ENCODE measurements at regions of chr2 and their contacts with region 1.

Region 1: DNA sequence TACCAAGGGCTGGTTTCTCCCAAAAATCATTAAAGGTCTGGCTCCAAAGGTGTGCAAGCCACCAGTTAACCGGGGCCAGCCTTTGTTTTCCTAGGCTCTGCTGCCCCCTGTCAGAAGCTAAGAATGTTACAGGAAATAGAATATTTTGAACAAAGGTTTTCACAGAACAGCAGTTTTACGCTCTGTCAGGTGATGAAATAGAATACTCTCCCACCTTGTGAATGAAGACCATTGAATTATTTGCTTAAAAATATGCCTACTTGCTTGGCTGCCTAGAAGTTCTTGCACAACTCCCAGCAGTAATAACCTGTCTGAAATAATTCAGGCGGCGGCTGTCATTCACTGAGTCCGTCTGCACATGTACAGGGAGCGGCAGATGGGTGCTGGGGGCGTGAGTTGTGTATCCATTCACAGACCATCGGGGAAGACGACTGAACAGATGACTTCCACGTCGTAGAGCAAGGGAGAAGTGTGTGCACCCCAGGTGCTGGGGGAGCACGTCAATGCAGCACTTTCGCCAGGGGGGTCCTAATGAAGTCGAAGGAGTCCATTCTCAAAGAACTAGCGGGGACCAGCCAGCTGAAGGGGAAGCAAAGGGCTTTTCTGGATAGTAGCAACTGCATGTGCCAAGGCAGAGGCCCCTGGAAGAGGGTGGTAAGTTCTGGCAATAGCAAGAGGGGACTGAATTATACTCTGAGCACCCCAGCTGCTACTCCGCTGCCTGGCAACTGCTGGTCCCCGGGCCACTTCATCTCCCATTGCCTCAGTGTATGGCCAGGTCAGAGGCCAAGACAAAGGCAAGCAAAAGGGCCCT is 56.1 kb downstream of the SF3B1 start:
- DNase-seq: peak; percentile 60 to 69 (median 63)
- H3K4me3 ChIP-seq: no peak overlapping the region
- H3K4me3 Mint-ChIP-seq: no peak overlapping the region
- H3K27ac ChIP-seq: no peak overlapping the region
- H3K27ac Mint-ChIP-seq: peak overlapping the region in 2 of 7 donors; percentile 0 to 52
- H3K4me1 ChIP-seq: peaks cover 8% of the 10 kb centered on the region
- H3K4me1 Mint-ChIP-seq: peaks cover 5 to 12% (median 10%) of the 10 kb centered on the region in 4 donors
- H3K27me3 ChIP-seq: no peaks in the 10 kb centered on the region
- H3K27me3 Mint-ChIP-seq: peaks cover 1 to 3% of the 10 kb centered on the region in 2 donors

Region 2: DNA sequence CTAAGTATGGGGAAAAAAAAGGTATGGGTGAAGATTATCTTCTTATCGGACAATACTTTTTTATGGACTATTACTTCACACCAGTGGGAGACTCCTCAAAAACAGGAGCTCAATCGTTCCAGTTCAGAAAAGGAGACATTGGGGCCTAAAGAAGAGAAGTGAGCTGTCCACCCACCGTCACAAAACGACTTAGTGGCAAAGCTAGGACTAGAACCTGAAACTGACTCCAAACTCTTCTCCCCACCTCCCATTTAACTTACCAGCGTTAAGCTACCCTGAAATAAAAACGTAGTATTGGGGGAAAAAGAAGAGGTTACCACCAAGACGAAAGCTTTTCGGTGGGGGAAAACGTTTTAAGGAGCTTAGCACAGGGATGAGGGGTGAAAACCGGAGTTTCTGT is 579.7 kb before region 1 on chr2:
- CTCF ChIA-PET with region 1: no interaction called
- POLR2A ChIA-PET with region 1: no interaction called
- intact Hi-C with region 1: loop called (anchors 2 kb)
- DNase-seq: peak in 1 of 5 donors; percentile 1
- H3K4me3 ChIP-seq: peak overlapping the region; percentile 83 to 88
- H3K4me3 Mint-ChIP-seq: peak overlapping the region; percentile 95 to 100 (median 98)
- H3K27ac ChIP-seq: peak overlapping the region; percentile 58
- H3K27ac Mint-ChIP-seq: peak overlapping the region; percentile 77 to 99 (median 96)
- H3K4me1 ChIP-seq: peaks cover 14% of the 10 kb centered on the region
- H3K4me1 Mint-ChIP-seq: peaks cover 19 to 41% (median 28%) of the 10 kb centered on the region in 4 donors
- H3K27me3 ChIP-seq: no peaks in the 10 kb centered on the region
- H3K27me3 Mint-ChIP-seq: peaks cover 0 to 3% of the 10 kb centered on the region in 2 donors

Region 3: GRCh38 chr2:197011799-197012641 is 366.7 kb before region 1 on chr2:
- CTCF ChIA-PET with region 1: interaction called, 6 read pairs
- POLR2A ChIA-PET with region 1: no interaction called
- intact Hi-C with region 1: loop called (anchors 1 kb)
- DNase-seq: peak in 4 of 5 donors; percentile 28 to 43 (median 37)
- H3K4me3 ChIP-seq: no peak overlapping the region
- H3K4me3 Mint-ChIP-seq: no peak overlapping the region
- H3K27ac ChIP-seq: no peak overlapping the region
- H3K27ac Mint-ChIP-seq: peak overlapping the region; percentile 50 to 80 (median 68)
- H3K4me1 ChIP-seq: no peaks in the 10 kb centered on the region
- H3K4me1 Mint-ChIP-seq: peaks cover 3 to 10% (median 9%) of the 10 kb centered on the region in 4 donors
- H3K27me3 ChIP-seq: no peaks in the 10 kb centered on the region
- H3K27me3 Mint-ChIP-seq: no peaks in the 10 kb centered on the region

Measured in CD4-positive, alpha-beta memory T cell (primary cell).